ENCODE measurements at regions of chr1 and their contacts with region 1.

Region 1: DNA sequence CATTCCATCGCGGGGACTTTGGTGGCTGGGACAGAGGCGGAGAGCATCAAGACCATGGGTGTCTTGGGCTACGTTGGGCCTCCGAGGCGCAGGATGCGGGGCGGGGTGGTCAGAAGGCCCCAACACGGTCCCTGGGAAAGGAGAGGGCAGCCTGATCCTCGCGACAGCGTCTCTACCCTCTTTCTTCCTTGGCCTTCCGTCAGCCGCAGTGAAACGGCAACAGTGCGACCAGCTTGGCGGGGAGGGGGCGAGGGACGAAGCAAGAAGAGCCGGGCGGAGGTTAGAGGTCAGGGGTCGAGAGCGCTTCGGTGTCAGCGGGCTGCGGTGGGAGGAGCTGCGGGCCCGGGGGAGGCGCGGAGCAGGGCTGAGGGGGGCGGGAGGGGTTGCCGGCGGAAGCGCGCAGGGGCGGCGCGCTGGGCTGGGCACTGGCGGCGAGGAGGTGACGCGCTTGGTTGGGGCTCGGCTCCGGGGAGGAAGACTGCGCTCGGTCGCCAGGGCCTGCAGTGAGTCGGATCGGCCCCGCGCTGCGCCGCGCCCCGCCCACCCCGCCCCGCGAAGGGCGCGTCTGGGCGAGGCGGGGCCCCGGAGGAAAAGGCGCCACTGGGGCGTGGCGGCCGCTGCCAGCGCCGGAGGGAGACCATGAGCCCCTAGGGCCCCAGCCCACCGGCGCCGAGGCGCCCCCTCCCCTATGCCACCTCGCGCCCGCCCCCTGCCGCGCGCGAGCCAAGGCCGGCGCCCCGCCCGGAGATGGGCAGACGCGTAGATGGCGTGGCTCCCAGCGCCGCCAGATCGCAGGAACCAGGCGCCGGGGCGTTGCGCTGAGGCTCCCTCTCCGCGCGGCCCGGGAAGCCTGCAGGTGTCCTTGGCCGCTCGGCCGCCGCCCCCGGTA is at the start of gene KCNC4:
- DNase-seq: peak; percentile 96
- ATAC-seq: peak; percentile 85
- H3K4me3 ChIP-seq: peak within 1 kb of the TSS; percentile 34 to 75 (median 66)
- H3K4me3 Mint-ChIP-seq: peak within 1 kb of the TSS; percentile 95
- H3K27ac ChIP-seq: peak within 1 kb of the TSS; percentile 76 to 83
- H3K27ac Mint-ChIP-seq: peak within 1 kb of the TSS; percentile 96
- H3K4me1 ChIP-seq: peaks cover 17 to 31% of the 10 kb centered on the region in 2 donors
- H3K4me1 Mint-ChIP-seq: peaks cover 43% of the 10 kb centered on the region
- H3K27me3 ChIP-seq: peaks cover 0 to 8% (median 0%) of the 10 kb centered on the region in 4 experiments
- H3K27me3 Mint-ChIP-seq: no peaks in the 10 kb centered on the region
- CTCF ChIP-seq: no peak
- total RNA-seq, gene KCNC4: 24.1 and 24.3 TPM in 2 replicates

Region 2: GRCh38 chr1:110243574-110243973 is 33.6 kb after region 1 on chr1:
- CTCF ChIA-PET with region 1: interaction called, 19 read pairs
- POLR2A ChIA-PET with region 1: interaction called, 4 read pairs
- intact Hi-C with region 1: loop called (anchors 2 kb)
- DNase-seq: peak; percentile 78
- ATAC-seq: peak; percentile 80
- H3K4me3 ChIP-seq: no peak overlapping the region
- H3K4me3 Mint-ChIP-seq: peak overlapping the region; percentile 61
- H3K27ac ChIP-seq: peak overlapping the region in 1 of 2 donors; percentile 41
- H3K27ac Mint-ChIP-seq: peak overlapping the region; percentile 57
- H3K4me1 ChIP-seq: peaks cover 20 to 37% of the 10 kb centered on the region in 2 donors
- H3K4me1 Mint-ChIP-seq: peaks cover 40% of the 10 kb centered on the region
- H3K27me3 ChIP-seq: no peaks in the 10 kb centered on the region
- H3K27me3 Mint-ChIP-seq: no peaks in the 10 kb centered on the region
- CTCF ChIP-seq: no peak

Region 3: GRCh38 chr1:110312188-110313121 is 102.5 kb after region 1 on chr1:
- CTCF ChIA-PET with region 1: interaction called, 838 read pairs
- POLR2A ChIA-PET with region 1: interaction called, 7 read pairs
- intact Hi-C with region 1: loop called (anchors 1 kb)
- DNase-seq: peak; percentile 81
- ATAC-seq: peak; percentile 95
- H3K4me3 ChIP-seq: no peak overlapping the region
- H3K4me3 Mint-ChIP-seq: no peak overlapping the region
- H3K27ac ChIP-seq: no peak overlapping the region
- H3K27ac Mint-ChIP-seq: no peak overlapping the region
- H3K4me1 ChIP-seq: peaks cover 0 to 4% of the 10 kb centered on the region in 2 donors
- H3K4me1 Mint-ChIP-seq: no peaks in the 10 kb centered on the region
- H3K27me3 ChIP-seq: no peaks in the 10 kb centered on the region
- H3K27me3 Mint-ChIP-seq: no peaks in the 10 kb centered on the region
- CTCF ChIP-seq: peak; percentile 89

Region 4: DNA sequence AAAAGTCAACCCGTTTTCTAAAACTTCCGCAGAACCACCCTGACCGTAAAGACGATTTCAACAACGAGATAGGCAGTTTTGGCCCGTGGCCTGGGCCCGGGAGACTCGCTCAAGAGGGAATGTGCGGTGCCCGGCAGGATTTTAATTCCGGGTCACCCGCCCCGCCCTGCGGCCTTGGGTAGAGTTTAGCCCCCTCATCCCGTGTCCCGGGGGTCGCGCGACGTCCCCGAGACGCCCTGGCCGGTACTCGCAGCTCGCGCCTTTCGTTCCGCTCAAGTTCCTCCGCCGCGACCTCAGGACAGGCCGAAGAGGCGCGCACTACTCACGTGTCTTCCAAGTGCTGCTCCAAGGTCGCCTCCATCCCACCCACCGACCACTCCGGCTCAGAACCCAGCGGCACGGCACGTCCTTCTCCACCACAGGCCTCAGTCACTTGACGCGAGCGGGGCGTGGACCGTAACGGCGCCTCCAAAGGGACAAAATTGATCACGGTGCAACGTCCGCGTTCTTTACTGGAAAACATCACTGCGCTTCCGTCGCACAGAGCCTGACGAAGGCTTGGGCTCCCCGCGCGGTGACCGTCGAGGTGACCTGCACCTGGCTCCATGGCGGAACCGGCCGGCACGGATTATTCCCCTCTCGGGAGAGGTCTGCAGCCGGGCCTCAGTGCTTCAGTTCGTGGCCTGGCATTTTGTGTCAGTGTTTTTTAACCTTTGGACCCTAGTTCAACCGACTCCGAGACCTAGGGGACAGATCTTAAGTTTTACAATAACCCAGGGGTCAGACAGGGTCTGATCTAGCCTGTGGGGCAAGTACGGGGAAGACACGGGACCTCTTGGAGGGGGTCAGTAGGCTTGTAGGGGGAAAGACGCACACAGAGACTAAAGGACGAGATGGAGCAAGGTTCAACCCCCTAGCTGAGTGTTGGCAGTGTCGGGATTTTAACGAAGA is 197.6 kb after region 1 on chr1 and contains the start of gene LAMTOR5:
- CTCF ChIA-PET with region 1: interaction called, 153 read pairs
- POLR2A ChIA-PET with region 1: interaction called, 3 read pairs
- intact Hi-C with region 1: loop called (anchors 1 kb)
- DNase-seq: peak; percentile 94
- ATAC-seq: peak; percentile 92
- H3K4me3 ChIP-seq: peak within 1 kb of the TSS; percentile 76 to 99 (median 90)
- H3K4me3 Mint-ChIP-seq: peak within 1 kb of the TSS; percentile 100
- H3K27ac ChIP-seq: peak within 1 kb of the TSS; percentile 87 to 90
- H3K27ac Mint-ChIP-seq: peak within 1 kb of the TSS; percentile 99
- H3K4me1 ChIP-seq: peaks cover 18 to 23% of the 10 kb centered on the region in 2 donors
- H3K4me1 Mint-ChIP-seq: peaks cover 25% of the 10 kb centered on the region
- H3K27me3 ChIP-seq: no peaks in the 10 kb centered on the region
- H3K27me3 Mint-ChIP-seq: no peaks in the 10 kb centered on the region
- CTCF ChIP-seq: peak; percentile 23
- total RNA-seq, gene LAMTOR5: 145 and 151 TPM in 2 replicates

Region 5: GRCh38 chr1:110436635-110437034 is 226.7 kb after region 1 on chr1:
- CTCF ChIA-PET with region 1: interaction called, 12 read pairs
- POLR2A ChIA-PET with region 1: no interaction called
- intact Hi-C with region 1: no loop called
- DNase-seq: no peak
- ATAC-seq: no peak
- H3K4me3 ChIP-seq: no peak overlapping the region
- H3K4me3 Mint-ChIP-seq: no peak overlapping the region
- H3K27ac ChIP-seq: no peak overlapping the region
- H3K27ac Mint-ChIP-seq: no peak overlapping the region
- H3K4me1 ChIP-seq: no peaks in the 10 kb centered on the region
- H3K4me1 Mint-ChIP-seq: no peaks in the 10 kb centered on the region
- H3K27me3 ChIP-seq: peaks cover 0 to 6% (median 2%) of the 10 kb centered on the region in 4 experiments
- H3K27me3 Mint-ChIP-seq: peaks cover 42% of the 10 kb centered on the region
- CTCF ChIP-seq: no peak

Measured in B cell (primary cell).